ENCODE measurements at regions of chr22 and their contacts with region 1.

Region 1: GRCh38 chr22:23767673-23768548 is at the start of gene CHCHD10:
- DNase-seq: peak; percentile 55 to 84 (median 70)
- ATAC-seq: peak; percentile 72
- H3K4me3 ChIP-seq: peak within 1 kb of the TSS; percentile 85
- H3K4me3 Mint-ChIP-seq: peak within 1 kb of the TSS; percentile 85
- H3K27ac ChIP-seq: peak within 1 kb of the TSS in 1 of 2 donors; percentile 23
- H3K27ac Mint-ChIP-seq: peak within 1 kb of the TSS; percentile 51
- H3K4me1 ChIP-seq: peaks cover 66% of the 10 kb centered on the region
- H3K4me1 Mint-ChIP-seq: peaks cover 29% of the 10 kb centered on the region
- H3K27me3 ChIP-seq: no peaks in the 10 kb centered on the region
- H3K27me3 Mint-ChIP-seq: no peaks in the 10 kb centered on the region
- CTCF ChIP-seq: peak; percentile 62
- total RNA-seq, gene CHCHD10: 34.4 to 43.0 TPM

Region 2: DNA sequence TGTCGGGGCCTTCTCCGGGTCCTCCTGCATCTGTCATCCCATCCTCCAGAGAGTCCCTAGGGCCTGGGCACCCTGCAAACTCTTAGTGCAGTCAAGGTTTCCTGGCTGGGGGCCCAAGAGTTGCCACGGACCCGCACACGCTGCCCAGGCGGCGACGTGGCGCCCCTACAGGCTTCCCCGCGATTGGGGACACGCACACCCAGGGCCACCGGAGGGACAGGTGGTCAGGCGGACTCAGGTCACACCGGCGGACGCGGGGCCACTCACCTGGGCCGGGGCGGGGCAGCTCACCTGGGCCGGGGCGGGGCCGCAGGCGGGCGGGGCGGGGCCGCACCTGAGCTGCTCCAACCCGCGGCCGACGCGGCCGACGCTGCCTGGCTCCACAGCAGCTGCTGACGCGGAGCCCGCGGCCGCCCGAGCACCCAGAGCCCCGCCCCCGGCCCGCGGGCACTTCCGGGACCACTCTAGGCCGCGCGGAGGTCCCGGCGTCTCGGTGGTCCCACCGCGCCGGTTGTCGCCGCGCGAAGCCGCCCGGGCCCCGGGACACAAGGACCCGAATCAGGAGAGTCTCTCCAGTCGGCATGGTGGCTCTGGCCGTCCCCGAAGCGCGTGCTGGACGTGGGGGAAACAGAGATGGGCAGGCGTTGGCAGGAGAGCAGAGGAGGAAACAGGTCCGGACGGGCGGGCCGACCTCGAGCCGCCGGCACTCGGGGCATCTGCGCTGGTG is 17.0 kb before region 1 on chr22 and contains the start of gene ZNF70:
- CTCF ChIA-PET with region 1: interaction called, 3 read pairs
- POLR2A ChIA-PET with region 1: interaction called, 10 read pairs
- intact Hi-C with region 1: no loop called
- DNase-seq: peak; percentile 67 to 95 (median 84)
- ATAC-seq: peak; percentile 99
- H3K4me3 ChIP-seq: peak within 1 kb of the TSS; percentile 84
- H3K4me3 Mint-ChIP-seq: peak within 1 kb of the TSS; percentile 81
- H3K27ac ChIP-seq: peak within 1 kb of the TSS; percentile 43 to 73
- H3K27ac Mint-ChIP-seq: peak within 1 kb of the TSS; percentile 72
- H3K4me1 ChIP-seq: peaks cover 17% of the 10 kb centered on the region
- H3K4me1 Mint-ChIP-seq: peaks cover 12% of the 10 kb centered on the region
- H3K27me3 ChIP-seq: no peaks in the 10 kb centered on the region
- H3K27me3 Mint-ChIP-seq: no peaks in the 10 kb centered on the region
- CTCF ChIP-seq: no peak
- total RNA-seq, gene ZNF70: 1.3 to 1.9 TPM